Transverse colon (tissue), 4 donors: ENCODE measurements at regions of chr15 and their contacts with region 1.

Region 1: DNA sequence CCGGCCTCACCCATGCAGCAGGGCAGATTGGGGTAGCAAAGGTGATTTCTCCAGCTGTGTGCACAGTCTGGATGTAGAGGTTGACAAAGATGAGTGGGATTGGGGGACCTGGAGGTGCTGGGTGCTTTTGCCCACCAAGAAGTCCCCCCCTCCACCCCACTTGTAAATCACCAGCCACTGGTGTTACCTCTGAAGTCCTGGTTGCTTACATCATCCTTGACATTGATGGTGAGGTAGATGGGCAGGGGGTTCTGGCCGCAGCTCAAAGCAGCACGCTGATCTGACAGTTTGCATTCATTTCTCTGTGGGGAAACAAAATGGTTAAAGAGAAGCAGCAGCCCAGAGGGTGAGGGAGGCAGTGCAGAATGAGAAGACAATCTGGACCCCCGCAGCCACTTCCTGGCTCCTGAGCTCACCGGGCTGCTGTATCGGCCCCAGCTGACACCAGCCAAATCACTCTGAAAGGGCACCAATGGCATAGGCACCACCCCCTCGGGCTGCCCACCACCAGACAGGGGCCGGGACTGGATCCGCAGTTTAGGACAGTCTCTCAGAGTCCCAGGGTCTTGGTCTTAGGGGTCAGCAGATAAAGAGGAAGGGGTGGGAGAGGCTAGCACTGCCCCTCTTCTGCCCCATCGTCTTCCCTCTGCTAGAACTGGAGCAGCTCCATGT is 17.7 kb upstream of the EHD4 start:
- DNase-seq: no peak
- H3K4me3 ChIP-seq: no peak overlapping the region
- H3K27ac ChIP-seq: no peak overlapping the region
- H3K4me1 ChIP-seq: no peaks in the 10 kb centered on the region
- H3K27me3 ChIP-seq: no peaks in the 10 kb centered on the region
- CTCF ChIP-seq: no peak
- EP300 ChIP-seq: no peak
- POLR2A ChIP-seq: no peak

Region 2: DNA sequence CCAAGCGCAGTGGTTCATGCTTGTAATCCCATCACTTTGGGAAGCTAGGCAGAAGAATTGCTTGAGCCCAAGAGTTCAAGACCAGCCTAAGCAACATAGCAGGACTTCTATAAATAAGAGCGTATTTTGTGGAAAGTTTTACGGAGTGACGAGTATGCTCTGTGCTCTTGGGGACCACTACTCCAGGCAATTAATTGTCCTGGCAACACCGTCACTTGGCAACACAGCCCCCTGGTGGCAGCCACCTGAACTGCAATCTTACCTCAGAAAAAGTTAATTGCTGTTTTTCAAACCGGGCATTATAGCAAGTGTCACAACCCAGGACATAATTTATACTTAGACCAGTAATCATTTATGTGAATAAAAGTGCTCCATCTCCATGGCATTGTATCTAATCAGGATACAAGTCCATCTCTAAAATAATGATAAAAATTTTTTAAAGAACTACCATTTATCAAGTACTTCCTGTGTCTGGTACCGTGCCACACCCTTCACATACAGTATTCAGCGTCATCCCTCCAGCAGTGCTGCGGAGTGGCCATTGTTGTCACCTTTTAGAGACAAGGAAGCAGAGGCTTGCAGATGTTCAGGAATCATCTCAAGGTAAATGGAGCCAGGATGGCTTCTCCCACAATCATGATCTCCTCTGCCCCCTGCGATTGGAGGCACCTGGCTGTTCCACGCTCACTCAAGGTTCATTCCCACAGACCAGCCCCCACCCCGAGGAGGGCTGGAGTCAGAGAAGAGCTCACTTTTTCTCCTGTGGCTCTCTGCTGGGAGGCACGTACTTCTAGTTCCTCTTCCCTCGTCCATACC is 69.8 kb after region 1 on chr15:
- in situ Hi-C with region 1: loop called (anchors 5 to 10 kb)
- intact Hi-C with region 1: no loop called
- DNase-seq: peak; percentile 70
- H3K4me3 ChIP-seq: no peak overlapping the region
- H3K27ac ChIP-seq: no peak overlapping the region
- H3K4me1 ChIP-seq: peaks cover 4 to 12% (median 6%) of the 10 kb centered on the region in 4 donors
- H3K27me3 ChIP-seq: no peaks in the 10 kb centered on the region
- CTCF ChIP-seq: peak; percentile 86 to 90 (median 89)
- EP300 ChIP-seq: no peak
- POLR2A ChIP-seq: no peak

Region 3: DNA sequence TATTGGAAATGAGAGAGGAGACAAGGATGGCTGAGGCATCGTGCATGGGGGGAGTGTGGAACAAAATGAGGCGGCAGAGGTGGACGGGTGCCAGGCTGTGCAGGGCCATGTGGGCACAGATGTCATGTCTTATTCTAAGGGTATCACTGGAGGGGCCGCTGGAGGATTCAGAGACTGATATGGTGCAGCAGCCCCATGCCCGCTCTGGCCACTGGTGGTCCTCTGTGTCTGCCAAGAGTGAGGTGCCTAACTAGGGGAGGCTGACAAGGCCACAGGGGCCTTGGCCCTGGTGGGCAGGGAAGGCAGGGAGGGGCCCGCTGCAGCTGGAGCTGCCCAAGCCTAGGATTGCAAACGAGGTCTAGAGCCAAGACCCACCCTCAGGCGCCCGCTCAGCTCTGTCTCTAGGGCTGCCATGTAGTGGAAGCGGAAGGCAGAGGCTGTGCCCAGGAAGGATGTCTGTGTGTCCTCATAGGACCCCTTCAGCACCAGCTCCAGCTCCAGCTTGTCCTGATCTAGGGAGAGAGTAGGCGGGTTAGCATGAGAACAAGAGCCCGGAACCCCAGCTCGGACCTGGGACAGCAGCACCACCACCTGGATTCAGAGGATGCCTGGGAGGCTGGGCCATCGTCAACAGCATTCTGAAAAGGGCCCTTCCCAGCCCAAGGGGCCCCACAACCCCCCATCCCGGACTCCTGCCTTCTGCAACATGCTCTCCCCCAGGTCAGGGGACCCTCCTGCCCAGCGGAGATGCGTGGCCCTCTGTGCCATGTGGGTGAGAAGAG is 92.9 kb after region 1 on chr15:
- in situ Hi-C with region 1: no loop called
- intact Hi-C with region 1: loop called (anchors 2 kb)
- DNase-seq: peak; percentile 7
- H3K4me3 ChIP-seq: no peak overlapping the region
- H3K27ac ChIP-seq: no peak overlapping the region
- H3K4me1 ChIP-seq: peaks cover 0 to 9% (median 6%) of the 10 kb centered on the region in 4 donors
- H3K27me3 ChIP-seq: no peaks in the 10 kb centered on the region
- CTCF ChIP-seq: no peak
- EP300 ChIP-seq: no peak
- POLR2A ChIP-seq: no peak

Region 4: GRCh38 chr15:42137431-42138261 is 147.6 kb after region 1 on chr15:
- in situ Hi-C with region 1: loop called in 1 of 4 experiments (anchors 10 kb)
- intact Hi-C with region 1: no loop called
- DNase-seq: no peak
- H3K4me3 ChIP-seq: no peak overlapping the region
- H3K27ac ChIP-seq: no peak overlapping the region
- H3K4me1 ChIP-seq: peaks cover 0 to 28% (median 14%) of the 10 kb centered on the region in 4 donors
- H3K27me3 ChIP-seq: no peaks in the 10 kb centered on the region
- CTCF ChIP-seq: peak in 3 of 5 experiments; percentile 21 to 39 (median 29)
- EP300 ChIP-seq: no peak
- POLR2A ChIP-seq: no peak

Region 5: GRCh38 chr15:42240814-42241213 is 250.7 kb after region 1 on chr15:
- in situ Hi-C with region 1: no loop called
- intact Hi-C with region 1: no loop called
- DNase-seq: no peak
- H3K4me3 ChIP-seq: no peak overlapping the region
- H3K27ac ChIP-seq: no peak overlapping the region
- H3K4me1 ChIP-seq: no peaks in the 10 kb centered on the region
- H3K27me3 ChIP-seq: no peaks in the 10 kb centered on the region
- CTCF ChIP-seq: no peak
- EP300 ChIP-seq: no peak
- POLR2A ChIP-seq: no peak

Region 6: GRCh38 chr15:42401544-42402454 is 411.7 kb after region 1 on chr15:
- in situ Hi-C with region 1: no loop called
- intact Hi-C with region 1: no loop called
- DNase-seq: no peak
- H3K4me3 ChIP-seq: no peak overlapping the region
- H3K27ac ChIP-seq: no peak overlapping the region
- H3K4me1 ChIP-seq: peaks cover 0 to 5% (median 0%) of the 10 kb centered on the region in 4 donors
- H3K27me3 ChIP-seq: no peaks in the 10 kb centered on the region
- CTCF ChIP-seq: no peak
- EP300 ChIP-seq: no peak
- POLR2A ChIP-seq: no peak